Activated CD4-positive, alpha-beta T cell treated with anti-CD3 and anti-CD28 coated beads, Interleukin-2, amount 10 ng/mL, durations not matched to agents 7 days and 5 days (primary cell): ENCODE measurements at regions of chr17 and their contacts with region 1.

Region 1: DNA sequence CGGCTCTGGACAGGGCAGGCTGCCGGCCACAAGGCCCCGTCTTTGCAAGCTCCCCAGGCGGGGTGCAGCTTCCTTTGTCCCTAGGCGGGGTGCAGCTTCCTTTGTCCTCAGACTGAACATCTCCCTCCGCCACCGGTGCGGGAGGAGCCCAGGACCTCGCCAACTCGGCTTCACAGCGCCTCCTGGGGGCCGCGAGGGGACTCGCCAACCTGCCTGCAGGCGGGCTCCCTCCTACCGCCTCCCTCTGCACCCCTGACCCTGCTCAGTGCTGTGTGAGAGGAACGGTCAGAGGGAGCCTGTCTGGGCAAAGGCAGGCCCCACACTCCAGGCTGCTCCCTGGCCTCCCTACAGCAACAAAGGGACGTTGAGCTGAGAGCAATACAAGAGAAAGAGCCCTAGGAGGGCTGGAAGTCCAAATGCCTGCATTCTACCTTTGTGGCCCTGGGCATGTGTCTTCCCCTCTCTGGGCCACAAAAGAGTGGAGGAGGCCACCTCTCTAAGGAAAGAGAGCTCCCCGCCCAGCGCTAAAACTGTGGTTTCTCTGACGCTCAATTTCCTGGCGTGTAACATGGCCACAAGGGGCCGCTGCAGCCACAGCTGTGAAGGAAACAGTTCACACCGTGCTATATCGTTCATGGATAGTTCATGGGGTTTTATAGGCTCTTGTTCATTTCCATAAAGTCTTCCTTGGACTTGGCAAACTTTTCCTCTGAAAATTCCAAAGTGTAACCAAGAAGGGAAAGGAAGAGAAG is 20.9 kb upstream of the KRT19 start:
- DNase-seq: peak; percentile 89
- H3K4me3 Mint-ChIP-seq: peak overlapping the region; percentile 25
- H3K27ac Mint-ChIP-seq: peak overlapping the region; percentile 80
- H3K4me1 Mint-ChIP-seq: peaks cover 19% of the 10 kb centered on the region
- H3K27me3 Mint-ChIP-seq: peaks cover 2% of the 10 kb centered on the region

Region 2: GRCh38 chr17:41403798-41404671 is 145.0 kb before region 1 on chr17:
- CTCF ChIA-PET with region 1: interaction called, 10 read pairs
- POLR2A ChIA-PET with region 1: no interaction called
- DNase-seq: no peak
- H3K4me3 Mint-ChIP-seq: no peak overlapping the region
- H3K27ac Mint-ChIP-seq: no peak overlapping the region
- H3K4me1 Mint-ChIP-seq: peaks cover 29% of the 10 kb centered on the region
- H3K27me3 Mint-ChIP-seq: no peaks in the 10 kb centered on the region

Region 3: DNA sequence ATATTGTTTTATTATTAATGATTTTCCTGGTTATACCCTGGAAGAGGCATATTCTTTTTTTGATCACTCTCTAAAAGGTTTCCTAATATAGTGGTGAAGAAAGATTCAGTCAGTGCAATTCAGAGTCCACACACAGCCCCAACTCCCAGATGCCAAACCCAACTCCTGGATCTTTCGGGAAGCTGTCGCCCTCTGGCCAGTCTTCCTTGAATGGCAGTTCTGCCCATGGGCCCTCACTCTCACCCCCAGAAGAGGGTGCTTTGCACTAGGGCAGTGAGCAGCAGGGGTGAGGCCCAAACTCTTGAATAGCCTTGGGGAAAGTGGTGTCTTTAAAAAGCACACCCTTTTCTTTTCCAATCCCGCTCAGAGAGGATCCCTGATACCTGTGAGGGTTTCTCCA is 92.8 kb before region 1 on chr17:
- CTCF ChIA-PET with region 1: no interaction called
- POLR2A ChIA-PET with region 1: no interaction called
- DNase-seq: no peak
- H3K4me3 Mint-ChIP-seq: no peak overlapping the region
- H3K27ac Mint-ChIP-seq: no peak overlapping the region
- H3K4me1 Mint-ChIP-seq: no peaks in the 10 kb centered on the region
- H3K27me3 Mint-ChIP-seq: peaks cover 15% of the 10 kb centered on the region

Region 4: GRCh38 chr17:41505809-41506731 is 43.0 kb before region 1 on chr17:
- CTCF ChIA-PET with region 1: interaction called, 11 read pairs
- POLR2A ChIA-PET with region 1: no interaction called
- DNase-seq: no peak
- H3K4me3 Mint-ChIP-seq: no peak overlapping the region
- H3K27ac Mint-ChIP-seq: no peak overlapping the region
- H3K4me1 Mint-ChIP-seq: no peaks in the 10 kb centered on the region
- H3K27me3 Mint-ChIP-seq: no peaks in the 10 kb centered on the region

Region 5: GRCh38 chr17:41567317-41567716 is 18.3 kb after region 1 on chr17:
- CTCF ChIA-PET with region 1: interaction called, 30 read pairs
- POLR2A ChIA-PET with region 1: no interaction called
- DNase-seq: no peak
- H3K4me3 Mint-ChIP-seq: no peak overlapping the region
- H3K27ac Mint-ChIP-seq: peak overlapping the region; percentile 86
- H3K4me1 Mint-ChIP-seq: peaks cover 6% of the 10 kb centered on the region
- H3K27me3 Mint-ChIP-seq: peaks cover 28% of the 10 kb centered on the region

Region 6: DNA sequence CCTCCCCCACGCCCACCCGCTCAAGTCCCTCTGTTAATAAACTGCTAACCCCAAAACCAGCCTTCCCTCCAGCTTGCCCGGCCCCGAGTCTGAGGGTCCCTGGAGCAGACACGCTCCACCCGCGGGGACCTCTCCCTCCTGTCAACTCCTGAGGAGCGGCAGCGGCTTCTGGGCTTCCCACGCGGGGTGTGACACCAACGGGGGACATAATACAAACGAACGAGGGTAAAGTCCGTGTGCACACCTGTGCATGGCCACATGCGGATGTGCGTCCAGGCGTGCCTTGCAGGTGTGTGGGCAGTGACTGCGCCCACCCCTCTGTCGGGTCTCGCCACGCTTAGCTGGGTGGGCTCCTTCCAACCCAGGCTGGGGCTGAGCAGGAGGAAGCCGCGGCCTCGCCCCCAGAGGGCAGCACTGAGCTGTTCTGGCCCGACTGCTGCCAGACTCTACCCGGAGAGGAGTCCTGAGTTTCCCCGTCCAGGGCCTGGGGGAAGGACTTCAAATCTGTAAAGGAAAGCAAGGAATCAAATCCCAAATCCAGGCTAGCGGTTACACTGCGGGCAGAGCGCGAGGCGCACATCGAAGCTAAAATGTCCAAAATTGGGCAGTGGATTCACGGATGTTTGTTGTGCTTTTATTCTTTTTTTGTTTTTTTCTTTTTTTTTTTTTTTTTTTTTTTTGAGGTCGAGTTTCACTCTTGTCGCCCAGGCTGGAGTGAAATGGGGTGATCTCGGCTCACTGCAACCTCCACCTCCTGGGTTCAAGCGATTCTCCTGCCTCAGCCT is 99.6 kb after region 1 on chr17:
- CTCF ChIA-PET with region 1: interaction called, 52 read pairs
- POLR2A ChIA-PET with region 1: no interaction called
- DNase-seq: peak; percentile 83
- H3K4me3 Mint-ChIP-seq: peak overlapping the region; percentile 53
- H3K27ac Mint-ChIP-seq: peak overlapping the region; percentile 81
- H3K4me1 Mint-ChIP-seq: peaks cover 10% of the 10 kb centered on the region
- H3K27me3 Mint-ChIP-seq: no peaks in the 10 kb centered on the region

Region 7: DNA sequence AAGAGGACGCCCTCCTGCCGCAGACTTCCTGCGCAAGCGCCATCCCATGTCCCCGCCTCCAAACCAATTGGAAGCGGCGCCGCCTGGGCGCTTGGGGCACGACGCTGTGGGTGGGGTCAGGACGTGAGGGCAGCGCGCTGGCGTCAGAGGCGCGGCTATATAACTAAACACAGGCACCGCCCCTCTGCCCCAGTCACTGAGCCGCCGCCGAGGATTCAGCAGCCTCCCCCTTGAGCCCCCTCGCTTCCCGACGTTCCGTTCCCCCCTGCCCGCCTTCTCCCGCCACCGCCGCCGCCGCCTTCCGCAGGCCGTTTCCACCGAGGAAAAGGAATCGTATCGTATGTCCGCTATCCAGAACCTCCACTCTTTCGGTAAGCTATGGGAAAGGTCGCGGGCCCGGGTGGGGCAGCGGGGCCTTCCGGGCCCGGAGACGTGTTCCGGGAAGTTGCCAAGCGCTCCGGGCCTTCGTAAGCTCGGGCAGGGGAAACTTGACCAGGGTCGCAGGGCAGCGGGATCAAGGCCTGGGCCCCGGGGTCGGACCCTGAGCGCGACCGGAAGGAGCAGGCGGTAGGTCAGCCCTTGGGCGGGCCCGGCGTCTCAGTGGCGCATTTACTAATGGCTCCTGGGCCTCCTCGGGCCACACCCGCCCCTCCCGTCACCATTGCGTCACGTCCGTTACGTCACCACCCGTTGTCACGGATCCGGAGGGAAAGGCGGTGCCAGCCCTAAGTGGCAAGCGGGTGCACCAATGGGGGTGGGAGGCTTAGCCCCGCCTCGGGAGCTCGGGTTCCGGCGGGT is 139.9 kb after region 1 on chr17 and contains the start of gene EIF1:
- CTCF ChIA-PET with region 1: interaction called, 11 read pairs
- POLR2A ChIA-PET with region 1: no interaction called
- DNase-seq: peak; percentile 100
- H3K4me3 Mint-ChIP-seq: peak within 1 kb of the TSS; percentile 88
- H3K27ac Mint-ChIP-seq: peak within 1 kb of the TSS; percentile 100
- H3K4me1 Mint-ChIP-seq: peaks cover 36% of the 10 kb centered on the region
- H3K27me3 Mint-ChIP-seq: no peaks in the 10 kb centered on the region
- total RNA-seq, gene EIF1: 605 to 645 TPM

Region 8: GRCh38 chr17:41717408-41718286 is 168.6 kb after region 1 on chr17:
- CTCF ChIA-PET with region 1: no interaction called
- POLR2A ChIA-PET with region 1: no interaction called
- DNase-seq: peak; percentile 39
- H3K4me3 Mint-ChIP-seq: no peak overlapping the region
- H3K27ac Mint-ChIP-seq: peak overlapping the region; percentile 72
- H3K4me1 Mint-ChIP-seq: peaks cover 14% of the 10 kb centered on the region
- H3K27me3 Mint-ChIP-seq: peaks cover 3% of the 10 kb centered on the region